ENCODE measurements at regions of chr17 and their contacts with region 1.

Region 1: GRCh38 chr17:78095035-78095434 is 33.5 kb downstream of the TMC6 start:
- DNase-seq: no peak
- H3K4me3 ChIP-seq: no peak overlapping the region
- H3K27ac ChIP-seq: no peak overlapping the region
- H3K4me1 ChIP-seq: no peaks in the 10 kb centered on the region
- H3K27me3 ChIP-seq: 0 out of 2 replicates have a peak, but pooled peaks cover 3% of the 10 kb centered on the region
- CTCF ChIP-seq: no peak

Region 2: DNA sequence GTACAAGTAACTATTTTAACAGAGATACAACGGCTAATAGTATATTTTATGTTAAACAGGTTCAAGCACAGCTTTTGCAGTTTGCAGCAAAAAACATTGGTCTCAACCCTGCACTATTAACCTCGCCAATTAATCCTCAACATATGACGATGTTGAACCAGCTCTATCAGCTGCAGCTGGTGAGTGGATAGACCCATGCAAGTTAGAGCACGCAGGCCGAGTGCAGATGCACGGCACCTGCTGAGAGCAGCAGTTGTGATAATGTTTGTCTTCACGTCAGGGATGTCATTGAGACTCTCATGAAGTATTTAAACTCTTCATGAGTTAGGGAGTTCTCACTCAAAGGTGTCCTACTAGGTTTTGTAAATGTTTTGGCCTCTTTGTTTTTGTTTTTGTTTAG is 12.0 kb before region 1 on chr17:
- CTCF ChIA-PET with region 1: interaction called, 12 read pairs
- POLR2A ChIA-PET with region 1: no interaction called
- intact Hi-C with region 1: no loop called
- DNase-seq: no peak
- H3K4me3 ChIP-seq: no peak overlapping the region
- H3K27ac ChIP-seq: no peak overlapping the region
- H3K4me1 ChIP-seq: no peaks in the 10 kb centered on the region
- H3K27me3 ChIP-seq: peaks cover 10% of the 10 kb centered on the region
- CTCF ChIP-seq: no peak

Region 3: GRCh38 chr17:78154903-78155811 is 60.1 kb after region 1 on chr17:
- CTCF ChIA-PET with region 1: no interaction called
- POLR2A ChIA-PET with region 1: no interaction called
- intact Hi-C with region 1: no loop called
- DNase-seq: no peak
- H3K4me3 ChIP-seq: no peak overlapping the region
- H3K27ac ChIP-seq: no peak overlapping the region
- H3K4me1 ChIP-seq: no peaks in the 10 kb centered on the region
- H3K27me3 ChIP-seq: no peaks in the 10 kb centered on the region
- CTCF ChIP-seq: no peak

Measured in PC-9 (cell line).